ENCODE measurements at regions of chr3 and their contacts with region 1.

Region 1: GRCh38 chr3:15797642-15798303 is at the start of gene ANKRD28:
- DNase-seq: peak in 5 of 9 donors; percentile 8 to 29 (median 20)
- ATAC-seq: peak; percentile 67
- H3K4me3 ChIP-seq: peak within 1 kb of the TSS; percentile 0
- H3K4me3 Mint-ChIP-seq: peak within 1 kb of the TSS in 9 of 10 donors; percentile 28 to 96 (median 57)
- H3K27ac ChIP-seq: no peak within 1 kb of the TSS
- H3K27ac Mint-ChIP-seq: peak within 1 kb of the TSS in 8 of 9 donors; percentile 2 to 97 (median 50)
- H3K4me1 ChIP-seq: peaks cover 26 to 38% of the 10 kb centered on the region in 2 donors
- H3K4me1 Mint-ChIP-seq: peaks cover 42 to 84% (median 76%) of the 10 kb centered on the region in 7 donors
- H3K27me3 ChIP-seq: no peaks in the 10 kb centered on the region
- H3K27me3 Mint-ChIP-seq: no peaks in the 10 kb centered on the region
- total RNA-seq, gene ANKRD28: 27.4 to 70.4 (median 43.2) TPM

Region 2: DNA sequence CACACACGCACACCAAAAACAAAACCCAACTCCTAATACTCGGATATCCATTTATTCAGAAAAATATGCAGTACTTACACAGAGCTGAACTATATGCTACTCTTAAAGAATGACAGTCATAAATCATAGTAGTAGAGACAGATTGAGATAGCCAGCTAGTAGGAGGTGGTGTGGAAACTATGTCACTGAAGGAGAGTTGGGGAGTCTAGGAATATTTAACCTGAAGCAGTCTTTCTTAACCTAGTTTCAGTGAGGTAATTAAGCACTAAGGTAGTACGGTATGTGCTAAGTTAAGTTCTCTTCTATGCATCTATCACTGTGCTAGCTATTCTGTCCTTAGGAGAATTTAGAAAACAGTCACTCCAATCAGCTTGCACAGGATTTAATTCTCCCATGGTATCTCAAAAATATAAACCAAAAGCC is 54.2 kb before region 1 on chr3:
- CTCF ChIA-PET with region 1: no interaction called
- POLR2A ChIA-PET with region 1: no interaction called
- intact Hi-C with region 1: loop called in 1 of 2 experiments (anchors 1 kb)
- DNase-seq: no peak
- ATAC-seq: no peak
- H3K4me3 ChIP-seq: no peak overlapping the region
- H3K4me3 Mint-ChIP-seq: no peak overlapping the region
- H3K27ac ChIP-seq: no peak overlapping the region
- H3K27ac Mint-ChIP-seq: peak overlapping the region in 4 of 9 donors; percentile 3 to 88 (median 19)
- H3K4me1 ChIP-seq: peaks cover 0 to 9% of the 10 kb centered on the region in 2 donors
- H3K4me1 Mint-ChIP-seq: peaks cover 9 to 54% (median 39%) of the 10 kb centered on the region in 7 donors
- H3K27me3 ChIP-seq: no peaks in the 10 kb centered on the region
- H3K27me3 Mint-ChIP-seq: no peaks in the 10 kb centered on the region

Region 3: DNA sequence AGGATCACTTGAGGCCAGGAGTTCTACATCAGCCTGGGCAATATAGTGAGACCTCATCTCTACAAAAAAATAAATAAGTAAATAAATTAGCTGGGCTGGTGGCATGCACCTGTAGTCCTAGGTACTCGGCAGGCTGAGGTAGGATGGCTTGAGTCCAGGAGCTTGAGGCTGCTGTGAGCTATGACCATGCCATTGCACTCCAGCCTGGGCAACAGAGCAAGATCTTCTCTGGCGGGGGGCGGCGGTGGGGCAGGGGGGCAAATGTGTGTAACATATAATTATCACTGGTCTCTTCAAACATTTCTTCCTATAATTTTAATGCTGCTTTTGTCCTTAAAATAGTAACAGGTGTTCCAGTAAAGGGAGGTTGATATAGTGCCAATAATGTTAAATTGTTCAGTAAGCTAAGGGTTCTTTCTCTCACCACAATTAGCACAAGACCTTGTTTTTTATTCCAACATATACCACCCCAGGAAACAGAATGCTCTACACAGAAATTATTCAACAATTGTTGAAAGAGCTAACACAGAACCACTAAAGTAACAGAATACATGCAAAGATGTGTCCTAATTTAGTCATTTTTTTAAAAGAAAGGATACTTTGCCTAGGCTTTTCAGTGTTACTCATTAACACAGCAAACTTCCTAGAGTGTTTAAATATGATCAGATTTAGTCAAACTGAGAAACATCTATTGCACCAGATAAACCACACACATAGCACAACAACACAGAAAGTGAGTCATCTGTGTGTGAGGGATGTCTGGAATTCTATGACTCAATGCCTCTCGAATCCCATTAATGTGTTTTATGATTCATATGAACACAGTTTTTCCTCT is 29.1 kb before region 1 on chr3:
- CTCF ChIA-PET with region 1: no interaction called
- POLR2A ChIA-PET with region 1: no interaction called
- intact Hi-C with region 1: loop called in 1 of 2 experiments (anchors 2 kb)
- DNase-seq: no peak
- ATAC-seq: peak; percentile 63
- H3K4me3 ChIP-seq: no peak overlapping the region
- H3K4me3 Mint-ChIP-seq: peak overlapping the region in 1 of 10 donors; percentile 39
- H3K27ac ChIP-seq: no peak overlapping the region
- H3K27ac Mint-ChIP-seq: peak overlapping the region in 1 of 9 donors; percentile 73
- H3K4me1 ChIP-seq: no peaks in the 10 kb centered on the region
- H3K4me1 Mint-ChIP-seq: peaks cover 8 to 30% (median 21%) of the 10 kb centered on the region in 7 donors
- H3K27me3 ChIP-seq: no peaks in the 10 kb centered on the region
- H3K27me3 Mint-ChIP-seq: no peaks in the 10 kb centered on the region

Region 4: DNA sequence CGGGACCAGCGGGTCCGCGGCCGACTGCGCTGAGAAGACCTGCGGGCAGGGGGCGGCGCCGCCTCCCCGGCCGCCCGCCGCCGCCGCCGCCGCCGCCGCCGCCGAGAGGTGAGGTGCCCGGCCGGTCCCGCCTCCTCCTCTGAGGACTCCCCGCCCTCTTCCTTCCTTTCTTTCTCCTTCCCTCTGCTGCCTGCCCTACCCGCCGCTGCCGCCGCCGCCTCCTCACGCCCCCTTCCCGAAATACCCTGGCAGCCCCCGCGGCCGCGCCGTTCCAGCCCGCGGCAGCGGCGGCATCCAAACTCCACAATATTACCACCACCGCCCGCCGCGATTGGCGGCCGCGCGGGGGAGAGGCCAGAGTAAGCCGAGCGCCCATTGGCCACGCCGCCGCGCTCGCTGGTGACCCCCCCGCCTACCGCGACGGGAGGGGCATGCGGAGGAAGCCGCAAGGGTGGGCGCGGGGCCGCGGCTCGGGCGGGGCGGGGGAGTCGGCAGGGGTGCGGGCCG is 61.8 kb after region 1 on chr3:
- CTCF ChIA-PET with region 1: no interaction called
- POLR2A ChIA-PET with region 1: no interaction called
- intact Hi-C with region 1: loop called in 1 of 2 experiments (anchors 2 kb)
- DNase-seq: peak; percentile 57 to 86 (median 71)
- ATAC-seq: peak; percentile 91
- H3K4me3 ChIP-seq: peak overlapping the region; percentile 63
- H3K4me3 Mint-ChIP-seq: peak overlapping the region; percentile 85 to 99 (median 95)
- H3K27ac ChIP-seq: peak overlapping the region; percentile 77
- H3K27ac Mint-ChIP-seq: peak overlapping the region in 6 of 9 donors; percentile 76 to 98 (median 92)
- H3K4me1 ChIP-seq: peaks cover 12 to 14% of the 10 kb centered on the region in 2 donors
- H3K4me1 Mint-ChIP-seq: peaks cover 21 to 50% (median 43%) of the 10 kb centered on the region in 7 donors
- H3K27me3 ChIP-seq: no peaks in the 10 kb centered on the region
- H3K27me3 Mint-ChIP-seq: peaks cover 0 to 10% (median 0%) of the 10 kb centered on the region in 5 donors